ENCODE measurements at regions of chr20 and their contacts with region 1.

Region 1: DNA sequence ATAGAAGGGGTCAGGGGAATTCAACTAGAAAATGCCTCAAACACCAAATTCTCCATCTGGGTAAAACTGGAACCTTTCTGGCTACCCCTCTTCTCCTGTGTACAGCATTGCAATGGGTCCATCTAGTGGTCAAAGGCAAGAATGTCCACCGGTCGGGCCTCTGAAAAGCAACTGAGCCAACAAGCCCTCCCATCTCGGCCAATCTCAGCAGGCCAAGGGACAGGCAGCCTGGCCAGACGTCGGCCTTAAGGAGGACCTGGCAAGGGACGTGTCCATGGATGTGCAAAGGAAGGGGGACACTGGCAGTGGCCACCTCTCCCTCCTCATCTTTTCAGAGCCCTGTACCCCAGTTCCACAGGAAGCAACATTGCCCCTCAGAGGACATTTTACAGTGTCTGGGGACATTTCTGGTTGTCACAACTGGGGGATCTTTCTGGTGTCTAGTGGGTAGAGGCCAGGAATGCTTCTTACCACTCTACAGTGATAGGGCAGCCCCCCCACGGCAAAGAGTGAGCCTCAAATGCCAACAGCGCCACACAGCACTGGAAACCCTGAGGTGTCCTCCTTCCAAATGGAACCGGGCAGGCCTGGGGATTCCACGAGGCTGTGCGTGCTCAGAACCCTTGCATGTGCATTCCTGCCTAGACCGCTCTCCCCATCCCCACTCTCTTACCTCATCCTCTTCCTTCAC is 99.8 kb upstream of the FOXA2 start:
- DNase-seq: peak; percentile 43 to 81 (median 70)
- ATAC-seq: peak; percentile 85 to 92 (median 91)
- H3K4me3 ChIP-seq: no peak overlapping the region
- H3K27ac ChIP-seq: no peak overlapping the region
- H3K4me1 ChIP-seq: peaks cover 0 to 4% (median 0%) of the 10 kb centered on the region in 3 donors
- H3K27me3 ChIP-seq: no peaks in the 10 kb centered on the region
- CTCF ChIP-seq: peak; percentile 70 to 88 (median 75)

Region 2: GRCh38 chr20:22333885-22334545 is 350.2 kb before region 1 on chr20:
- intact Hi-C with region 1: loop called (anchors 5 to 10 kb)
- DNase-seq: peak; percentile 31 to 75 (median 61)
- ATAC-seq: peak; percentile 84 to 98 (median 92)
- H3K4me3 ChIP-seq: no peak overlapping the region
- H3K27ac ChIP-seq: no peak overlapping the region
- H3K4me1 ChIP-seq: no peaks in the 10 kb centered on the region
- H3K27me3 ChIP-seq: no peaks in the 10 kb centered on the region
- CTCF ChIP-seq: peak; percentile 56 to 71 (median 66)

Region 3: DNA sequence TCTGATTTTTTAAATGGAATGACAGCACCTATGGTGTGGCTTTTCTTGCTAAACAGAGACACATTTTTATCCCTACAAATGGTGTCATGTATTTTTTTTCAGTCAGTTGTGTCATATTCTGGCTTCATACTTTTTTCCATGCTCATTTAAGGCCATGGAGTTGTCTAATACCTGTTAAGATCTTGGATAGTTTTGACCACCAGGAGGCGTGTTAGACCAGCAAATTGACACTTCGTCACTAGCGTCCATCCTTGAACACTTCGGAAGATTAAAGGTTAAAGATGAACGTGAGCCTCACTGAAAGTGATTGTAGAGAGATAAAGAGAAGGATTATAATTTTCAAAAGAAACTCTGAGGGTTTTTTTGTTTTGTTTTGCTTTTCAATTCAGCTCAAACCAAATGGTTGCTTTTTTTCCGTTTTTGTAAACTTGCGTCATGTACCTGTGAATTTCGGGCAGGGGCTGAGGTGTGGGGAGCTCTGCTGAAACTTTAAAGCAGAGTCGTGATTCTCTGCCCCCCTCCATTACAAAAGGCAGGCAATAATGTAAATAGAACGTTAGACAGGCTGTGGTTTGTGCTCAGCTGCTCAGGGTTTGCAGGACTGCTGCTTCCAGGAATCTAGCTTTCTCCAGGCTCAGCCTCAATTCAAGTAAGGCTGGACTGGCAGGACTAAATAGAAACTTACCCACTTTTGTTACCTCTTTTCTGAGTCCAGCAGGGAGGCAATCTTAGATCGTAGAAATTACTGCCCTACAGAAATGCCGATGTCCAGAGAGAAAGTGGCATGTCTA is 344.9 kb before region 1 on chr20:
- intact Hi-C with region 1: loop called (anchors 5 to 10 kb)
- DNase-seq: peak in 3 of 6 donors; percentile 23 to 65 (median 46)
- ATAC-seq: peak; percentile 81 to 86 (median 86)
- H3K4me3 ChIP-seq: peak overlapping the region in 1 of 4 donors; percentile 18
- H3K27ac ChIP-seq: no peak overlapping the region
- H3K4me1 ChIP-seq: no peaks in the 10 kb centered on the region
- H3K27me3 ChIP-seq: no peaks in the 10 kb centered on the region
- CTCF ChIP-seq: peak; percentile 53 to 67 (median 62)

Region 4: GRCh38 chr20:22586645-22587310 is 97.4 kb before region 1 on chr20:
- intact Hi-C with region 1: loop called in 2 of 3 experiments (anchors 10 kb)
- DNase-seq: peak; percentile 65 to 96 (median 80)
- ATAC-seq: peak in 3 of 4 donors; percentile 24 to 48 (median 40)
- H3K4me3 ChIP-seq: peak overlapping the region; percentile 20 to 54 (median 33)
- H3K27ac ChIP-seq: no peak overlapping the region
- H3K4me1 ChIP-seq: peaks cover 0 to 2% (median 0%) of the 10 kb centered on the region in 3 donors
- H3K27me3 ChIP-seq: peaks cover 0 to 4% (median 0%) of the 10 kb centered on the region in 4 donors
- CTCF ChIP-seq: peak; percentile 75 to 88 (median 84)

Region 5: DNA sequence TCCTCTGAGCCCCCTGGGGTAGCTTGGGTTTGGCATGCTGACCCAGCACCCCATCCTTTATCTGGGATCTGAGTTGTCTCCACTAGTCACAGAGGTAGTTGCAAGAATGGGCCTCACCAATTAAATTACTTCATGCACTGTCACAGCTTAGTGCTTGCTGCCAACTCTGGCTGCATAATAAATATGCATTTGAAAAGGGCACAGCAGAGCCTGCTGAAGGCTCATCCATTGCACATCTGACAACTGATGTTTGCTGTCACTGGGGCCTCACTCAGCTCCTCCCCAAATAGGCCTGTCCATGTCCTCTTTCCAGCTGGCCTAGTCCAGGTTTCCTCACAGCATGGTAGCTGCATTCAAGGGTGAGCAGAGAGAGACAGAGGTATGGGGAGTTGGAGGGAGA is 653.1 kb after region 1 on chr20:
- intact Hi-C with region 1: loop called in 1 of 3 experiments (anchors 5 kb)
- DNase-seq: no peak
- ATAC-seq: peak in 1 of 4 donors; percentile 16
- H3K4me3 ChIP-seq: no peak overlapping the region
- H3K27ac ChIP-seq: no peak overlapping the region
- H3K4me1 ChIP-seq: no peaks in the 10 kb centered on the region
- H3K27me3 ChIP-seq: no peaks in the 10 kb centered on the region
- CTCF ChIP-seq: no peak

Measured in pancreas (tissue), 10 donors.